Activated CD4-positive, alpha-beta memory T cell treated with anti-CD3 and anti-CD28 coated beads for 36 hours (primary cell): ENCODE measurements at regions of chr9 and their contacts with region 1.

Region 1: DNA sequence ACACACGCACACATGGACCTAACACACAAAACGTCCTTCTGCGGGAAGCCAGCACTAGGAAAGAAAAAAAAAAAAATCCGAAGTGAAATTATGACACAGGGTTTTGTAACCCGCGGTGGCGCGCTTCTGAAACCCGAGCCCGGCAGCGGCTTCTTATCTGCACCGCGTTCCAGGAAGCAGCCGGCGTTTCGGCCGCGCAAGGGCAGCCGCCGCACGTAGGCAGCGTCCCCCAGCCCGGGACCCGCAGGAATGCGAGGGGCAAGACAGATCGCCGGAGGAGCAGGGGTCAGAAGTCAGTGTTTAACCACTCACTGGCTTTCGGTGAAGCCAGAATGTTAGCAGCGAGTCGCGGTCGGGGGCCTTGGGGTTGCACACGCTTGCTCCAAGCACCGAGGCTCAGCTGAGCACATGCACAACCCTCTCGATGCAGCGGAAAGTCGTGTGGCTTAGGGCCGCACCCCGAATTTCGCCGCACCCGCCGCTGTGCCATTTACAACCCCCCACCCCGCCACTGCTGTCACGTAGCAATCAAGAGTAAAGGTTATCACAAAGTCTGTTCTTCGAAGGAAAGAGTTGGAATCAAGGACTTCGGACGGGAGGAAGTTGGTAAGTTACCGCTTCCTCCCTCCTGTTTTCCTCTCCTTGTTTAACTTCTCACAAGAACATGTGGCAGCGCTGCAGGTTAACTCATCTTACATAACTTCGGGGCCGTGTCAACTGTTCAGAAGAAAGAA is 167.9 kb downstream of the AUH start:
- DNase-seq: peak; percentile 92
- H3K4me3 Mint-ChIP-seq: peak overlapping the region; percentile 77
- H3K27ac Mint-ChIP-seq: peak overlapping the region; percentile 98
- H3K4me1 Mint-ChIP-seq: peaks cover 62% of the 10 kb centered on the region
- H3K27me3 Mint-ChIP-seq: no peaks in the 10 kb centered on the region

Region 2: GRCh38 chr9:91047993-91048607 is 145.7 kb before region 1 on chr9:
- CTCF ChIA-PET with region 1: no interaction called
- POLR2A ChIA-PET with region 1: no interaction called
- intact Hi-C with region 1: loop called (anchors 1 kb)
- DNase-seq: peak; percentile 73
- H3K4me3 Mint-ChIP-seq: no peak overlapping the region
- H3K27ac Mint-ChIP-seq: peak overlapping the region; percentile 83
- H3K4me1 Mint-ChIP-seq: peaks cover 58% of the 10 kb centered on the region
- H3K27me3 Mint-ChIP-seq: peaks cover 40% of the 10 kb centered on the region

Region 3: GRCh38 chr9:91101611-91102168 is 92.1 kb before region 1 on chr9:
- CTCF ChIA-PET with region 1: interaction called, 4 read pairs
- POLR2A ChIA-PET with region 1: interaction called, 17 read pairs
- intact Hi-C with region 1: loop called (anchors 1 kb)
- DNase-seq: peak; percentile 95
- H3K4me3 Mint-ChIP-seq: peak overlapping the region; percentile 73
- H3K27ac Mint-ChIP-seq: peak overlapping the region; percentile 93
- H3K4me1 Mint-ChIP-seq: peaks cover 56% of the 10 kb centered on the region
- H3K27me3 Mint-ChIP-seq: peaks cover 5% of the 10 kb centered on the region

Region 4: DNA sequence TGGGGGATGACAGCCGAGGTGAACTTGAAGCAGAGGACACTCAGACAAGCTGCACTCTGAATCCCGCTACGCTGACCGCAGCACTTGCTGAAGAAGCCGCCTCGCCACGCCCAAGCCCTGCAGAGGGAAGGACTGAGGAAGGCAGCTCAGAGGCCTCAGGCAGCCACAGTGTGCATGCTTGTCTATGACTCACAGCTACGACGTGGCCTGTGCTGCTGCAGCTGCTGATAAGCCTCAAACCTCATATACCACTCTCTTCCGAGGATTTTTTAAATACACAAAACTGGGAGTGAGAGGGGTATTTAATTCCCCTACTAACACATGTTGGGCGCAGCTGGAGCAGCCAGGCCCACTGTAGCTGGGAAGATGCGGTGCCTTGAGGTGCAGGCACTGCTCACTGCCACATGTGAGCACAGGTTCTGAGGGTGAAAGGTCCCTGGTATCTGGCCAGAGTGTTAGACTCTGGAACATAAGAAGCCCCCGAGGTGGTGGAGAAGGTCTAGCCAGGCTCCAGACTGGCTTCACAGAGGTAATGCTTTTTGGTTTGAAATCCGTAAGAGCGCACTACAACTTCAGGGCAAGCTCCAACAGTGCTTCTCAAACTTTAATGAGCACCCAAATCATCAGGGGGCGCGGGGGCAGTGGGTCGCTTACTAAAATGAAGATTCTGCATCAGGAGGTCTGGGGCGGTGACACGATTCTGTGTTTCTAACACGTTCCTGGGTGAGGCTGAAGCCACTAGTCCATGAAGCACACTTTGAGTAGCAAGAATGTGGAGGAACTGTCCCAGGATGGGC is 28.9 kb before region 1 on chr9:
- CTCF ChIA-PET with region 1: interaction called, 4 read pairs
- POLR2A ChIA-PET with region 1: interaction called, 11 read pairs
- intact Hi-C with region 1: loop called (anchors 1 kb)
- DNase-seq: peak; percentile 88
- H3K4me3 Mint-ChIP-seq: peak overlapping the region; percentile 61
- H3K27ac Mint-ChIP-seq: peak overlapping the region; percentile 92
- H3K4me1 Mint-ChIP-seq: peaks cover 46% of the 10 kb centered on the region
- H3K27me3 Mint-ChIP-seq: no peaks in the 10 kb centered on the region

Region 5: DNA sequence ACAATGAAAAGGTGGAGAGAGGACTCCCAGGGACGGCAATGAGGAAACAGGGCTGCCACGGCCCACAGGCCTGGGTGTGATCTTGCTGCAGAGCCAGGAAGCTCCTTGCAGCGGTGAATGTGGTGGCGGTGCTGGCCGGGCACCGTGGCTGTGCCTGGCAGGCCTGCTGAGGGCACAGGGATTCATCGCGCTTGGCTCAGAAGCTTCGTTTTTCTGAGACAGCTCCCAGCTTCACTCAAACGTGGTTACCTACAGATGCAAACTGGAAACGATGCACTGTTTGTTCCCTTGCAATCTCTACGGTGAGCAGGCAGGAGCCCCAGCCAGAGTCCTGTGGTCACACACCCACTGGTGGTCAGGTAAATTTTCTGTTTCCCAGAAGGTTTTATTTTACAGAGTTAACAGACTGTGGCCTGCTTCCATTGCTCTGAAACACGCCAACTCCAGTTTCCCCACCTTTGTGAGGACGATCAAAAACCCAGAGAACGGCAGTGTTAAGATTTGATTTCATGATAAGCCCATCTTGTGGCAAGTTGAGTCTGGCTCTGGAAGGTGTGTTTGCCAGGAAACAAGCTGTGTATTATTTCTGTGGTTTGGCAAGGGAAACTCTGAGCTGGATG is 16.1 kb before region 1 on chr9:
- CTCF ChIA-PET with region 1: interaction called, 6 read pairs
- POLR2A ChIA-PET with region 1: interaction called, 23 read pairs
- intact Hi-C with region 1: loop called (anchors 1 kb)
- DNase-seq: peak; percentile 70
- H3K4me3 Mint-ChIP-seq: peak overlapping the region; percentile 9
- H3K27ac Mint-ChIP-seq: peak overlapping the region; percentile 89
- H3K4me1 Mint-ChIP-seq: peaks cover 37% of the 10 kb centered on the region
- H3K27me3 Mint-ChIP-seq: no peaks in the 10 kb centered on the region

Region 6: GRCh38 chr9:91245431-91246313 is 51.8 kb after region 1 on chr9:
- CTCF ChIA-PET with region 1: no interaction called
- POLR2A ChIA-PET with region 1: interaction called, 6 read pairs
- intact Hi-C with region 1: loop called (anchors 1 kb)
- DNase-seq: peak; percentile 41
- H3K4me3 Mint-ChIP-seq: no peak overlapping the region
- H3K27ac Mint-ChIP-seq: peak overlapping the region; percentile 89
- H3K4me1 Mint-ChIP-seq: peaks cover 28% of the 10 kb centered on the region
- H3K27me3 Mint-ChIP-seq: no peaks in the 10 kb centered on the region

Region 7: DNA sequence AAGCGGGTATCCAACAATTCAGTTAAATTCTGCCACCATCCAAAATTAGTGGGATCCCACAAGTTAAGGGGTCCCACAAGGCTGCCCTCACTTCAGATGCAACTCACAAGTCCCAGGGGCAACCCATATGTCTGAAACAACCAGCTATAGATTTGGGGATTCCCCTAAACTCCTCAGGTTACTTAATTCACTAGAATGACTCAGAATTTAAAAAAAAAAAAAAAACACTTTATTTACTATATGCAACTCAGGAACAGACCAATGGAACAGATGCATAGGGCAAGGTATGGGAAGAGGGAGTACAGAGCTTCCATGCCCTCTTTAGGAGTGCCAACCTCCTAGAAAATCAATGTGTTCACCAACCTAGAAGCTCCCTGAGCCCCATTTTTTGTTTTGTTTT is 152.8 kb after region 1 on chr9:
- CTCF ChIA-PET with region 1: no interaction called
- POLR2A ChIA-PET with region 1: no interaction called
- intact Hi-C with region 1: loop called (anchors 1 kb)
- DNase-seq: no peak
- H3K4me3 Mint-ChIP-seq: no peak overlapping the region
- H3K27ac Mint-ChIP-seq: no peak overlapping the region
- H3K4me1 Mint-ChIP-seq: peaks cover 57% of the 10 kb centered on the region
- H3K27me3 Mint-ChIP-seq: no peaks in the 10 kb centered on the region